ENCODE measurements at regions of chr10 and their contacts with region 1.

Region 1: GRCh38 chr10:7787857-7788638 is at the starts of genes ATP5F1C and KIN:
- DNase-seq: peak; percentile 98
- H3K27ac ChIP-seq: peak within 1 kb of the TSS; percentile 80
- CTCF ChIP-seq: no peak

Region 2: GRCh38 chr10:7541137-7542095 is 246.6 kb before region 1 on chr10:
- CTCF ChIA-PET with region 1: no interaction called
- POLR2A ChIA-PET with region 1: no interaction called
- DNase-seq: no peak
- H3K27ac ChIP-seq: no peak overlapping the region
- CTCF ChIP-seq: no peak

Region 3: GRCh38 chr10:7818295-7819122 is 30.5 kb after region 1 on chr10 and contains the start of gene TAF3:
- CTCF ChIA-PET with region 1: interaction called, 3 read pairs
- POLR2A ChIA-PET with region 1: interaction called, 16 read pairs
- DNase-seq: peak; percentile 83
- H3K27ac ChIP-seq: peak within 1 kb of the TSS; percentile 64
- CTCF ChIP-seq: no peak